ENCODE measurements at regions of chr9 and their contacts with region 1.

Region 1: GRCh38 chr9:105712773-105713172 is 18.4 kb downstream of the TMEM38B start:
- DNase-seq: peak in 1 of 5 donors; percentile 61
- H3K4me3 ChIP-seq: no peak overlapping the region
- H3K27ac ChIP-seq: no peak overlapping the region
- H3K4me1 ChIP-seq: peaks cover 0 to 2% (median 0%) of the 10 kb centered on the region in 3 donors
- H3K27me3 ChIP-seq: no peaks in the 10 kb centered on the region
- CTCF ChIP-seq: no peak

Region 2: DNA sequence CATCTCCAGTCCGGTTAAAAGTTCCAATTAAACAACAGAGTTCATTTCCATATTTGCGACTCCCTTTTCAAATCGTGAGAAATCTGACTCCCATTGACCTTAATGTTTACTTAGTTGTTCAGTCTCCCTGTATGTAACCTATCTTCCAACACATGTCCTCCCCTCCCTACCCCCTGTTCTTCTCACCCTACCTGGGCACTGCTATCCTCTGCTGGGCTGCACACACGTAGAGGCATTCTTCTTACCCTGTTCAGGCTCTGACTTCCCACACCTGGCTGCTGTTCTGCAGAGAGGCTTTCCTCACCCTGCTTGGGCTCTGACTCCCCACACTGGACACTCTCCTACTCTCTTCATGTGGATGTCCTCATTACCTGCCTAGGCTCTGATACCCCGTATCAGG is 102.4 kb before region 1 on chr9:
- intact Hi-C with region 1: loop called (anchors 10 kb)
- DNase-seq: no peak
- H3K4me3 ChIP-seq: no peak overlapping the region
- H3K27ac ChIP-seq: no peak overlapping the region
- H3K4me1 ChIP-seq: no peaks in the 10 kb centered on the region
- H3K27me3 ChIP-seq: no peaks in the 10 kb centered on the region
- CTCF ChIP-seq: no peak

Measured in kidney (tissue), 22 donors.